Posterior cingulate gyrus (tissue), 11 donors: ENCODE measurements at regions of chr5 and their contacts with region 1.

Region 1: DNA sequence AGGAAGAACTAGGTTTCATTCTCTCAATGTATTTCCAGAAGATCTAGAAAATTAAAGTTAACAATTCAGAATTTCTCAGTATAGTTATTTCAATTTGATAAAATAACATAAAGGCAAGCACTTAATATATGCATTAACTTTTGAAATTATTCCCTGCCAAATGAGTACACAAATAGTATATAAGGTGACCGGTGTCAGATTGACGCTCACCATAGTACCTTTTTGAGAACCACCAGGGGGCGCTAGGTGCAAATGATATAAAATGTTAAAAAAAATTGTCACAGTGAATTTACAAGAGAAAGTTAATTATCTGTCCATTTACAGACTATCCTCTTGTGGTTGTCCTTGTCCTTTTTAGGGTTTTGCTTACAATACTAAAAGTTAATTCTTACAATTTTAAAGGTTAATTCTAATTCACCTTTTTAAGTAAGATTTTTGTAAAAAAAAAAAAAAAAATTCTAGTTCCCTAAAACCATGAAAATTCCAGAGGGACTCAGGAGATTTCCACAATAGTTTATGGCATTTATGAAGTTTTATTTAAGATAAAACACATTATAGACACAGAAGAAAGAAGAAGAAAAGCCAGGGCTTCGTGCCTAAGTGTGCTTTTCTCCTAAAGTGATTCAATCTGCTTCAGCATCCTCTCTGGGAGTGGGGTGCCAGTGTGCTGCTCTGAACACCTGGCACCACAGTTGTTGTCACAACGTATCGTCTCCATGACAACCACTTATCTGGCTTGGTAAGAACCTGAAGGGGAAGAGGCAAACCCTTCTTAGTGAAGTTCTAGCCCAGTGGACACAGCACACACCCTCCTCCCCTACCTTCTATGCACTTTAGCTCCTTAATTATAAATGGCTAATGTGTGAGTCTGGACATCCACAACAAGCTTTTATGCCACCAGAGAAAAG is 1.7 kb downstream of the ADAMTS16 start:
- DNase-seq: peak in 5 of 10 donors; percentile 22 to 59 (median 42)

Region 2: DNA sequence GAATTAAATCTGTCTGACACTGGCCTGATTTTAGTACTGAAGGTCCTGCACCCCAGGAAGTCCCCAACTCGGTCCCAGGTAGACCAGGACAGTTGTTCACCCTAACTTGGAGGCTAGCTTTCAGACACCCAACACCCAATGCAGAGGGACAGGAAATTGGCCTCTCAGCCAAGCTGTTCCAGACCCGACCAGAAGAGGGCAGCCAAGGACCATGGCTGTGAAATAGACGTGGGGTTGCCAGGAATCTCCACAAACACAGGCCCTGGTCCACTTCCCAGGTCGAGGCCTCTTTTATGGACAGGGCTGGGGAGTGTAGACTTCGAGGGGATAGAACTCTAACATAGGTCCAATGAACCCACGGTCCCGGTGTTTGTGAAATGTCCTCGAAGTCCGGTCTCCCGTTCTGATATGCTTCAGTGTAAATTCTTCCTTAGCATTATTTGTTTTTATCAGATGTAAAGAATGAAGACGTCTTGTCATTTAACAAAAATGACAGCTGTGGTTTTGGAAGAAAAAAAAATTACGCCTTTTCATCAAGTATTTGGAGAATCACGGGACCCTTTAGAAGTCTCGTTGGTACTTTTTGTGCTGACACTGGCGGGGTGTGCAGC is 262.1 kb before region 1 on chr5:
- intact Hi-C with region 1: loop called (anchors 2 kb)
- DNase-seq: peak; percentile 68 to 97 (median 87)

Region 3: GRCh38 chr5:5398046-5398445 is 256.2 kb after region 1 on chr5:
- intact Hi-C with region 1: loop called (anchors 2 kb)
- DNase-seq: no peak

Region 4: DNA sequence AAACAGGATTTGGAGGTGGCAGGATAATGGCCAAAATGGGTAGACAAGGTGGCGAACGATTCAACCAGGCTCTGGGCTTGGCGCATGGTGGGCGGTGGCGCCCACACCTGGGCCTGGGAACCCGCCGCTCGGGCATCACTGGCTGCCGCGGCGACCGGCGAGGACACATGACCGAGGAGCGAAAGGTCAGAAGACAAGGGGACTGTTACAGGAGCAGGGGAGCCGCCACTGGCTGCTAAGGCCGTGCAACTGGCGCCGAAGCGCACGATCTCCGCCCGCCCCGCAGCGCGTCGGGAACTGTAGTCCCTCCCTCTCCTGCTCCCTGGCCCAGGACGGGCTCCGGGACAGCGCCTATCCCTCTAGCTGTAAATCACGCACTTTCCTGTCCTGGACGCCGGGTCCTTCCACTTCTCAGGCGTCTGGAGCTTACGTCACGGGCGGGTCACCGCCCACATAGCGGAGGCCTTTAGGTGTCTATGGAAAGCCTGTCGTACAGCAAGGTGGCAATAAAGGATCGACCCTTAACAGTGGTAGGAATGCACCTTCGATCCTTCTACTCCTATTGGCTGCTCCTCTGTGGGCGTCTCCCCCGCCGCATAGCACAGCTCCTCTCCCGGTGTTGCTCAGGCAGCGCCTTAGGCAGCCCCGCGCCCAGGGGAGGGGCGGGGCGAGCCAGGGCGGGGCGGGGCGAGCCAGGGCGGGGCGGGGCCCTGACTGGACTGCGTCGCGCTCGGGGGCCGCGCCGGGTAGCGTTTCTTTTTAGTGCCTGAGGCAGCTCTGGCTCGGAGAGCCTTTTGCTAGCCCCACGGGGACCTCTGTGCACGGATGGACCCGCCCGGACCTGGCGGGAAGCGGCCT is 280.3 kb after region 1 on chr5 and contains the start of gene ICE1:
- intact Hi-C with region 1: loop called (anchors 1 kb)
- DNase-seq: peak; percentile 96 to 100 (median 98)